ENCODE measurements at regions of chr14 and their contacts with region 1.

Region 1: DNA sequence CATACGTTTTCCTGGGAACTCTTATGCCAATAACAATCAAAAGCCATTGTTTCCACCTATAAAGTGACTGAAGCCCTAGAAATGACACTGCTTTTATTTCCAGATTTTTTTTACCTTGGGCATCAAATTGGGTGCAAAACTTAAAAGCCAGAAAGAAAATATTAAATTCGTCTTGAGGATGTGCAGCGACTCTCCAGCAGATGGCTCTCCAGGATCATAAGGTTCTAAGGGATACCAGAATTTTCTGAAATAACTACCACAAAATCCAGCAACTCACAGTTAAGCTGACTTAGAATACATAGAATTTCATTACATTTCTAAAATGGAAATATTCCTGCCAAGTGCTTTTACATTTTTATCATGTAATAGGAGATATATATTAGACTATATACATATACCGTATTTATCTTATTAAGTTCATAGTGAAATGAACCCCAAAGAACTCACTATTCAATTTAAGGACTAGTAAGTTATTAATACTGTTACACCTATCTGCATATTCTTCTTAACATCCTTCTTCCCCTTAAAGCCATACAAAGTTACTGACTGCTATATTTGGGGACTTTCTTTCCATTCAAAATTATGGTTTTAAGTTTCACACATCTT is 44.0 kb downstream of the ARMH4 start:
- DNase-seq: peak in 10 of 14 experiments; percentile 2 to 69 (median 16)
- ATAC-seq: no peak
- H3K4me3 ChIP-seq: no peak overlapping the region
- H3K4me3 Mint-ChIP-seq: no peak overlapping the region
- H3K27ac ChIP-seq: no peak overlapping the region
- H3K27ac Mint-ChIP-seq: no peak overlapping the region
- H3K4me1 ChIP-seq: no peaks in the 10 kb centered on the region
- H3K4me1 Mint-ChIP-seq: no peaks in the 10 kb centered on the region
- H3K27me3 ChIP-seq: no peaks in the 10 kb centered on the region
- H3K27me3 Mint-ChIP-seq: peaks cover 20% of the 10 kb centered on the region
- CTCF ChIP-seq: peak; percentile 70

Region 2: DNA sequence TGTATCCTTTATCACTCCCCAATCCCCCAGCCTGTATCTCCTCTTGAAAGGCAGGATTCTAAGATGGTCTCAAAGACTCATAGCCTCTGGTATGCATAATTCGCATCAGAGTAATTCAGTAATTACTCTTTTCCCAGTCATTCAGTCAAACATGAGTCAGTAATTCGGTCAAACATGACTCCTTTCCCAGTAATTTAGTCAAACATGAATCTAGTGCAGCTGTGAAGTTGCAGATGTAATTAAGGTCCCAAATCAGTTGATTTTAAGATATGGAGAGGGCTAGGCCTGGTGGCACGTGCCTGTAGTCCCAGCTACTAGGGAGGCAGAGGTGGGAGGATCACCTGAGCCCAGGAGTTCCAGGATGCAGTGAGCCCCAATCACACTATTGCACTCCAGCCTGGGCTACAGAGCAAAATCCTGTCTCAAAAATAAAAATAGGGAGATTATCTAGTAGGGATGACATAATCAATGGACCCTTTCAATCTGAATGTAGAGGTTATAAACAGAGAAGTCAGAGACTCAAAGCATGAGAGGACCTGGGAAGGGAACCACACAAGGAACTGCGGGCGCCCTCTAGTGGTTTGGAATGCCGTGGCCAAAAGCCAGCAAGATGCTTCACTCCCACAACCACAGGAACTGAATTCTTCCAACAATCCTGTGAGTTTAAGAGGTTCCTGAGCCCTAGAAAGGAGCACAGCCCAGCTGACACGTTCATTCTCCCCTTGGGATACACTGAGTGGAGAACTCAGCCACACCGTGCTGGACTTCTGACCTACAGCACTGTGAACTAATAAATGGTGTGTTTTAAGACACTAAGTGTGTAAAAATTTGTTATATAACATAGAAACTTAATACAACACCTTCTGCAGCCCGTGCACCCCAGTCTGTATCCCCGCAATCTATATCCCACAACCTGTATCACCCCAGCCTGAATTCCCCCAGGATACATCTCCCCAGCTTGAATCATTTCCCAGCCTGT is 58.2 kb after region 1 on chr14:
- CTCF ChIA-PET with region 1: interaction called, 4 read pairs
- POLR2A ChIA-PET with region 1: no interaction called
- intact Hi-C with region 1: loop called in 1 of 2 experiments (anchors 1 kb)
- DNase-seq: peak; percentile 48 to 80 (median 66)
- ATAC-seq: no peak
- H3K4me3 ChIP-seq: no peak overlapping the region
- H3K4me3 Mint-ChIP-seq: no peak overlapping the region
- H3K27ac ChIP-seq: no peak overlapping the region
- H3K27ac Mint-ChIP-seq: no peak overlapping the region
- H3K4me1 ChIP-seq: no peaks in the 10 kb centered on the region
- H3K4me1 Mint-ChIP-seq: no peaks in the 10 kb centered on the region
- H3K27me3 ChIP-seq: peaks cover 0 to 3% of the 10 kb centered on the region in 2 experiments
- H3K27me3 Mint-ChIP-seq: peaks cover 15% of the 10 kb centered on the region
- CTCF ChIP-seq: peak; percentile 92

Region 3: DNA sequence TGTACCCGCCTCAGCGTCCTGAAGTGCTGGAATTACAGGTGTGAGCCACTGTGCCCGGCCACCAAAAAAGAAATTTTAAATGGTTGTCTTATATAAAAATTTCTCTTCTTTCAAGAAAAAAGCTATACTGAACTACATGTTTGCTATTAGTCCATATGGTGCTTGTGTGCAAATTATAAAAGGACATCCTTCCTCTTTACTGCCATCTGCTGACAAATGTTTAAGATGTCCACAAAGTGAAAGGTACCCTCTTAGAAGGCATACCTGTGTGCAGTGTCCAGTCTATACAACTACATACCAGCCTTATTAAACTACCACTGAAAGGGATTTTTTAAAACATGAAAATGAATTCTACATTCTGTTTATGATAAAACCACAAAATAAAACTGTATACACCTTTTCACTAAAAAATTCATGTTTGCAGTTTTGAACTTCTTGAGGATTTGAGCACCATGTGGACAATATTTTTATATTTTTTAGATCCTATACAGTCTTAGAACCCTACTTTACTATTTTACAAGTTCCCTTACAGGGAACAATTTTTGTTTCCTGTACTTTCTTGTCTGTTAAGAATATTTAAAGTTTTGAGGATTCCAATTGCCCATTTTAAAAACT is 254.9 kb after region 1 on chr14:
- CTCF ChIA-PET with region 1: no interaction called
- POLR2A ChIA-PET with region 1: no interaction called
- intact Hi-C with region 1: loop called (anchors 1 to 2 kb)
- DNase-seq: peak in 3 of 14 experiments; percentile 53 to 54 (median 54)
- ATAC-seq: peak; percentile 63
- H3K4me3 ChIP-seq: no peak overlapping the region
- H3K4me3 Mint-ChIP-seq: no peak overlapping the region
- H3K27ac ChIP-seq: no peak overlapping the region
- H3K27ac Mint-ChIP-seq: no peak overlapping the region
- H3K4me1 ChIP-seq: no peaks in the 10 kb centered on the region
- H3K4me1 Mint-ChIP-seq: peaks cover 4% of the 10 kb centered on the region
- H3K27me3 ChIP-seq: no peaks in the 10 kb centered on the region
- H3K27me3 Mint-ChIP-seq: no peaks in the 10 kb centered on the region
- CTCF ChIP-seq: peak; percentile 63

Region 4: DNA sequence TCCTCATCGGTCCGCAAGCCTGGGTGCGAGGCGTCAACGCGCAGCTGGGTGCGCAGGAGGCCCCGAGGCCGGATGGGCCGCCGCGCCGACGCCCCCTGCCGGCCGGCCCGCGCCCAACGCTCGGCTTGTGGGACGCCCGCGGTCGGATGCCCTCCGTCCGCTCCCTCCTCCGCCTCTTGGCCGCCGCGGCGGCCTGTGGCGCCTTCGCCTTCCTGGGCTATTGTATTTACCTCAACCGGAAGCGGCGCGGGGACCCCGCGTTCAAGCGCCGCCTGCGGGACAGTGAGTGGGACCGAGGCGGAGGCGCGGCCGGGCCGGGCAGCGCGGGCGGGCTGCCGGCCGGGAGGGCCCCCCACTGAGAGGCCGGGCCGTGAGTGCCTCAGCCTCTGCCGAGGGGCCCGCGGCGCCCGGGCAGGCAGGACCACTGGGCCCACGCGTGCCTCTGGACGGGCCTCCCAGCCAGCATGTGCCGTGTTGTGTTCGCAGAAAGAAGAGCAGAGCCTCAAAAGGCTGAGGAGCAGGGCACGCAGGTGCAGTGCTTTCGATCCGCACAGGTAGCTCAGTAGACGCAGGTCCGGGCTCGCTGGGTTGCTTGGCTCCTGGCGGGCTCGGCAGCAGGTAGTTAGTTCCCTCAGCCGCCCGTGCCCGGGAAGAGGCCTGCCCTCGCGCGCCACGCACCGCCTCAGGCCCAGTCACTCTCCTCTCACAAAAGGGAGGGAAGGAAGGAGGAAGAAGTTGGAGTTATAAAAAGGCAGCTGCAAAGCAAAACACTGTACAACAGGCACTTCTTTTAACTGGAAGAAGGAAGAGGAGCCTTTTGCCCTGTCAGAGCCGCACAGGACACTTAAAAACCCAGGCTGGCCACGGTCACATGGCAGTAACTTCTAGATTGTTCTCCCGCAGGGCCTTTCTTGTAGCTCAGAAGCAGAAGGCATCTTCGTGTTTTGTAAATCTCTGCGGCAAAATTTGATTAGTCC is 288.1 kb after region 1 on chr14 and contains the start of gene TOMM20L:
- CTCF ChIA-PET with region 1: interaction called, 3 read pairs
- POLR2A ChIA-PET with region 1: no interaction called
- intact Hi-C with region 1: loop called (anchors 2 kb)
- DNase-seq: peak; percentile 48 to 88 (median 66)
- ATAC-seq: peak; percentile 77
- H3K4me3 ChIP-seq: peak within 1 kb of the TSS; percentile 71
- H3K4me3 Mint-ChIP-seq: peak within 1 kb of the TSS; percentile 88
- H3K27ac ChIP-seq: peak within 1 kb of the TSS; percentile 69 to 75
- H3K27ac Mint-ChIP-seq: peak within 1 kb of the TSS; percentile 85
- H3K4me1 ChIP-seq: peaks cover 13% of the 10 kb centered on the region
- H3K4me1 Mint-ChIP-seq: peaks cover 12% of the 10 kb centered on the region
- H3K27me3 ChIP-seq: no peaks in the 10 kb centered on the region
- H3K27me3 Mint-ChIP-seq: no peaks in the 10 kb centered on the region
- CTCF ChIP-seq: peak; percentile 80
- total RNA-seq, gene TOMM20L: 0.56 TPM in 1 of 2 experiments, not detected in the other

Region 5: GRCh38 chr14:58401585-58401984 is 293.5 kb after region 1 on chr14:
- CTCF ChIA-PET with region 1: interaction called, 3 read pairs
- POLR2A ChIA-PET with region 1: no interaction called
- intact Hi-C with region 1: loop called (anchors 2 kb)
- DNase-seq: peak in 3 of 14 experiments; percentile 15 to 27 (median 22)
- ATAC-seq: no peak
- H3K4me3 ChIP-seq: no peak overlapping the region
- H3K4me3 Mint-ChIP-seq: no peak overlapping the region
- H3K27ac ChIP-seq: no peak overlapping the region
- H3K27ac Mint-ChIP-seq: no peak overlapping the region
- H3K4me1 ChIP-seq: peaks cover 1% of the 10 kb centered on the region
- H3K4me1 Mint-ChIP-seq: peaks cover 1% of the 10 kb centered on the region
- H3K27me3 ChIP-seq: no peaks in the 10 kb centered on the region
- H3K27me3 Mint-ChIP-seq: no peaks in the 10 kb centered on the region
- CTCF ChIP-seq: no peak

Measured in CD4-positive, alpha-beta T cell (primary cell).